ENCODE measurements at regions of chr13 and their contacts with region 1.

Region 1: DNA sequence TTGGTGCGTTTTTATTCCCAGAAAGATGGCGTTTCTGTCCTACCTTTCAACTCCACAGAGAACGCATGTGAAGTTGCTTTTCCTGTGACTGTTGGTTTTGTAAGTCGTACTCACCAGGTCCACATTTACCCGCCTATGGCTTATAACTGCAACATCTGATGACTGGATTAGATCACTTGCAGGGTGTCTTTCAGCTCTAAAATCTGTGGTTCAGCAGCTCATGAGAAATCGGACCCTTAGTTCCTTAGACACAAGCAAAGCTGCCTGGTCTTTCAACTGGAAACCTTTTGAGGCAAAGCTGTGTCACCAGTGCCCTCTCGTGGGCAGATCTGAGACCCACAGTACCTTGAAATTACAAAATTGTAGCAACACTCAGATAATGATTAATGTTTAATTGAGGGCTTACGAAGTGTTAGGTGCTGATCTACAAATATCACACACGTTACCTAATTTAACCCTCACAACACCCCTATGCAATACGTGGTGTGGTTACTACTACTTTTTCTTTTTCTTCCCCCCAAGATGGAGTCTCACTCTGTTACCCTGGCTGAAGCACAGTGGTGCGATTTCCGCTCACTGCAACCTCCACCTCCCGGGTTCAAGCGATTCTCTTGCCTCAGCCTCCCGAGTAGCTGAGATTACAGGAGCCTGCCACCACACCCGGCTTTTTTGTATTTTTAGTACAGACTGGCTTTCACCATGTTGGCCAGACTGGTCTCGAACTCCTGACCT is 65.4 kb downstream of the RUBCNL start:
- DNase-seq: peak; percentile 60 to 89
- ATAC-seq: peak; percentile 89 to 94 (median 92)
- H3K4me3 ChIP-seq: peak overlapping the region; percentile 15
- H3K4me3 Mint-ChIP-seq: peak overlapping the region; percentile 57
- H3K27ac ChIP-seq: peak overlapping the region; percentile 60
- H3K27ac Mint-ChIP-seq: peak overlapping the region; percentile 83 to 91
- H3K4me1 ChIP-seq: peaks cover 8% of the 10 kb centered on the region
- H3K4me1 Mint-ChIP-seq: peaks cover 14 to 27% of the 10 kb centered on the region in 2 donors
- H3K27me3 ChIP-seq: no peaks in the 10 kb centered on the region
- H3K27me3 Mint-ChIP-seq: peaks cover 0 to 2% of the 10 kb centered on the region in 2 donors
- CTCF ChIP-seq: peak; percentile 83

Region 2: GRCh38 chr13:45511310-45512097 is 810.2 kb before region 1 on chr13:
- intact Hi-C with region 1: loop called (anchors 2 kb)
- DNase-seq: peak in 1 of 2 donors; percentile 84
- ATAC-seq: peak; percentile 76 to 83 (median 80)
- H3K4me3 ChIP-seq: no peak overlapping the region
- H3K4me3 Mint-ChIP-seq: no peak overlapping the region
- H3K27ac ChIP-seq: no peak overlapping the region
- H3K27ac Mint-ChIP-seq: peak overlapping the region; percentile 65 to 67
- H3K4me1 ChIP-seq: no peaks in the 10 kb centered on the region
- H3K4me1 Mint-ChIP-seq: peaks cover 4 to 14% of the 10 kb centered on the region in 2 donors
- H3K27me3 ChIP-seq: no peaks in the 10 kb centered on the region
- H3K27me3 Mint-ChIP-seq: no peaks in the 10 kb centered on the region
- CTCF ChIP-seq: peak; percentile 95

Region 3: DNA sequence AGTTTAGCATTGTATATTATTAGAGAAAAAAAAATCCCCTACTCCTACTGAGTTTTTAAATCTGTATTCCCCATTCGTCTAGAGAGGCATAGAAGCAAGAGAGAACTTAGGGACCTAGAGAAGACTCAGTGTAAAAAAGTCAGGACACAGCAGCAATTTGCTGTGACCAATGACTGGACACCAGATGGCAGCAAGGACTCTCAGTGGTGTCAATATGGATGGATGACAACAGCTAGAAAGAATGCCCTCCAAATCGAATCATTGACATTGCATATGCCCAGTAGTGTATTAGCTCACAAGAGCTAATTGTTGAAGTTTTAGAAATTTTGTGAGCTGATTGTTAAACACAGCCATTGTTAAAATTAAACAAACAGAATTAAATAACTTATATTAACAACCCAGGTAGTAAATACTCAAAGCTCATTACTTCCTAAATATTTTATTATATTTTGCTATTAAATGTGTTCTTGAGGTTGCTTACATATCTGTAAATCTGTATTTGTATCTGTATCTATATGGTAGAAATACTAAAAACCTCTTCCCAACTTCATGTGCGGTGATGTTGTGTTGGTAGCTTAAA is 514.0 kb before region 1 on chr13:
- intact Hi-C with region 1: loop called (anchors 10 kb)
- DNase-seq: peak in 1 of 2 donors; percentile 58
- ATAC-seq: peak in 1 of 3 donors; percentile 37
- H3K4me3 ChIP-seq: no peak overlapping the region
- H3K4me3 Mint-ChIP-seq: no peak overlapping the region
- H3K27ac ChIP-seq: no peak overlapping the region
- H3K27ac Mint-ChIP-seq: no peak overlapping the region
- H3K4me1 ChIP-seq: no peaks in the 10 kb centered on the region
- H3K4me1 Mint-ChIP-seq: no peaks in the 10 kb centered on the region
- H3K27me3 ChIP-seq: no peaks in the 10 kb centered on the region
- H3K27me3 Mint-ChIP-seq: peaks cover 3 to 13% of the 10 kb centered on the region in 2 donors
- CTCF ChIP-seq: no peak

Region 4: GRCh38 chr13:46160471-46161066 is 161.1 kb before region 1 on chr13:
- intact Hi-C with region 1: loop called (anchors 1 kb)
- DNase-seq: peak in 1 of 2 donors; percentile 93
- ATAC-seq: peak; percentile 80 to 93 (median 82)
- H3K4me3 ChIP-seq: no peak overlapping the region
- H3K4me3 Mint-ChIP-seq: peak overlapping the region; percentile 80
- H3K27ac ChIP-seq: peak overlapping the region; percentile 67
- H3K27ac Mint-ChIP-seq: peak overlapping the region; percentile 88 to 96
- H3K4me1 ChIP-seq: peaks cover 24% of the 10 kb centered on the region
- H3K4me1 Mint-ChIP-seq: peaks cover 59 to 67% of the 10 kb centered on the region in 2 donors
- H3K27me3 ChIP-seq: no peaks in the 10 kb centered on the region
- H3K27me3 Mint-ChIP-seq: no peaks in the 10 kb centered on the region
- CTCF ChIP-seq: peak; percentile 80

Region 5: GRCh38 chr13:46211483-46212351 is 109.9 kb before region 1 on chr13 and contains the start of gene LRRC63:
- intact Hi-C with region 1: loop called (anchors 1 kb)
- DNase-seq: peak; percentile 74 to 89
- ATAC-seq: peak; percentile 98 to 100 (median 99)
- H3K4me3 ChIP-seq: peak within 1 kb of the TSS; percentile 56
- H3K4me3 Mint-ChIP-seq: peak within 1 kb of the TSS; percentile 93
- H3K27ac ChIP-seq: peak within 1 kb of the TSS; percentile 68
- H3K27ac Mint-ChIP-seq: peak within 1 kb of the TSS; percentile 79 to 90
- H3K4me1 ChIP-seq: peaks cover 6% of the 10 kb centered on the region
- H3K4me1 Mint-ChIP-seq: peaks cover 16 to 17% of the 10 kb centered on the region in 2 donors
- H3K27me3 ChIP-seq: no peaks in the 10 kb centered on the region
- H3K27me3 Mint-ChIP-seq: no peaks in the 10 kb centered on the region
- CTCF ChIP-seq: no peak
- total RNA-seq, gene LRRC63: 0.32 to 0.95 (median 0.40) TPM

Region 6: GRCh38 chr13:46288570-46289259 is 32.9 kb before region 1 on chr13:
- intact Hi-C with region 1: loop called (anchors 5 kb)
- DNase-seq: peak in 1 of 2 donors; percentile 80
- ATAC-seq: peak; percentile 72 to 87 (median 81)
- H3K4me3 ChIP-seq: no peak overlapping the region
- H3K4me3 Mint-ChIP-seq: no peak overlapping the region
- H3K27ac ChIP-seq: no peak overlapping the region
- H3K27ac Mint-ChIP-seq: no peak overlapping the region
- H3K4me1 ChIP-seq: no peaks in the 10 kb centered on the region
- H3K4me1 Mint-ChIP-seq: peaks cover 0 to 7% of the 10 kb centered on the region in 2 donors
- H3K27me3 ChIP-seq: no peaks in the 10 kb centered on the region
- H3K27me3 Mint-ChIP-seq: no peaks in the 10 kb centered on the region
- CTCF ChIP-seq: peak; percentile 84

Region 7: DNA sequence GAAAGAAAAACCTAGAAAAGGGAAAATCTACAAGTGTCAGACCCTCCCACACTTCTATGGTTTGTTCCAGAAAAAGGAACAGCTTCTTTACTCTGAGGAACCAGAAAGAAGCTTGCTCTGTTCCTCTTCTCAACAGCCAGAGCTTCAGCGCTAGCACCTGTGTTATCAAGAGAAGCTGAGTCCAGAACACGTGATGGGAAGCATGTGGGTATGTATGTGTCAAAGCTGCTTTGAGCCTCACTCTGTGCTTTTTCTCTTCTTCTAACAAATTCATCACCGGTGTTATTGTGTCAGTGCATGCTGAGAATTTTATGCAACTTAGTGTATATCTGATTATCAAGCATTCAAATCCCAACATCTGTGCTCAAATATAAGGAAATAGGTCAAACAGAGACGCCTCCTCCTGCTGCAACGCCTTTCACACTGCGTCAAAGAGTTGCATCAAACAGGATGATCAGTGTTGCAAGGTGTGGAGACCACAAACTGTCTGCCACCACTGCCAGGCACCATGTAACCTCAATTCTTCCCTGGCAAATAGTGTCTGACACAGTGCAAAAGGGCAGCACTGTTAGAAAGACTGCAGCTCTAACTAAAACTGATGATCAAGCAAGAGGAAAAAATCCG is 26.1 kb before region 1 on chr13:
- intact Hi-C with region 1: loop called (anchors 2 kb)
- DNase-seq: peak; percentile 68 to 92
- ATAC-seq: peak; percentile 80 to 94 (median 91)
- H3K4me3 ChIP-seq: no peak overlapping the region
- H3K4me3 Mint-ChIP-seq: peak overlapping the region; percentile 79
- H3K27ac ChIP-seq: peak overlapping the region; percentile 83
- H3K27ac Mint-ChIP-seq: peak overlapping the region; percentile 88 to 97
- H3K4me1 ChIP-seq: peaks cover 29% of the 10 kb centered on the region
- H3K4me1 Mint-ChIP-seq: peaks cover 39 to 40% of the 10 kb centered on the region in 2 donors
- H3K27me3 ChIP-seq: no peaks in the 10 kb centered on the region
- H3K27me3 Mint-ChIP-seq: no peaks in the 10 kb centered on the region
- CTCF ChIP-seq: no peak

Measured in natural killer cell (primary cell).